ENCODE measurements at regions of chr17 and their contacts with region 1.

Region 1: DNA sequence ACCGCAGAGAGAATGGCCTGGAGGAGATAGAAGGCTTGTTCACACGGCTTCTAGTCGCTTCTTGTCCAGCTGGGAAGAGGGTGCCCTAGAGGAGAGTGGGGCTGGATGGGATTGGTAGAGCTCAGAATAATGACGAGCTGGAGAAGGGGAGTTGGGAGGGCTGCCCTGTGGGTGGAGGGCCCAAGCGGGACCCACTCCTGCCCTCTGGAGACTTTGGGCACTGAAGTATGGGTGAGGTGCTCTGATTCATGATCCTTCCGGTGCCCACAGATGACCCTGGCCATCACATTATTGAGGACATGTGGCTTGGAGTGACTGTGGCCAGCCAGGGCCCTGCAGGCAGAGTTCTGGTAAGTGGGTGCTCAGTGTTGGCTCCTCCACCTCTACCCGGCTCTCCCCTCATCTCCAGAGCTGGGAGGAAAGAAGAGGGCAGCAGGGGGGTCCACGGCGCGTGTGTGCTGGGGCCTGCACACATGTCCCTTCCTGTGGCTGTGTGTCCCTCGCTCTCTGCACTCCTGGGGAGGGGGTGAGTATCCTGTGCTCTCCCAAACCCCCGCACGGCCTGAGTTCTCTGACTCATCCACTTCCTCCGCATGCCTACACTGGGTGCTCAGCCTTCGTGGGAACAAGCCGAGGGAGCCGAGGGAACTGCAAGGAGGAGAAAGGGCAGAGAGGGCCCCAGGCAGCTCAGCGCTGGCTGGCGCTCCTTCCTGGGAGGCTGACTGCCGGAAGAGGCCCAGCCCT is 8.5 kb downstream of the ITGA3 start:
- DNase-seq: peak; percentile 74 to 76
- H3K4me3 ChIP-seq: peak overlapping the region in 1 of 3 donors; percentile 27
- H3K27ac ChIP-seq: peak overlapping the region; percentile 93 to 96
- H3K4me1 ChIP-seq: peaks cover 18 to 39% of the 10 kb centered on the region in 2 donors
- H3K27me3 ChIP-seq: no peaks in the 10 kb centered on the region
- CTCF ChIP-seq: peak in 1 of 3 donors; percentile 33
- POLR2A ChIP-seq: no peak

Region 2: GRCh38 chr17:50026901-50027630 is 37.4 kb before region 1 on chr17:
- intact Hi-C with region 1: loop called (anchors 5 kb)
- DNase-seq: peak; percentile 81 to 91
- H3K4me3 ChIP-seq: peak overlapping the region in 2 of 3 donors; percentile 26 to 59
- H3K27ac ChIP-seq: peak overlapping the region; percentile 80 to 82
- H3K4me1 ChIP-seq: peaks cover 10 to 14% of the 10 kb centered on the region in 2 donors
- H3K27me3 ChIP-seq: no peaks in the 10 kb centered on the region
- CTCF ChIP-seq: peak; percentile 97 to 98 (median 97)
- POLR2A ChIP-seq: no peak

Measured in breast epithelium (tissue), 4 donors.